ENCODE measurements at regions of chr1 and their contacts with region 1.

Region 1: GRCh38 chr1:82269431-82269830 is 468.7 kb downstream of the ADGRL2 start:
- DNase-seq: no peak
- ATAC-seq: no peak
- H3K4me3 ChIP-seq: no peak overlapping the region
- H3K27ac ChIP-seq: no peak overlapping the region
- H3K4me1 ChIP-seq: no peaks in the 10 kb centered on the region
- H3K27me3 ChIP-seq: no peaks in the 10 kb centered on the region
- CTCF ChIP-seq: no peak

Region 2: DNA sequence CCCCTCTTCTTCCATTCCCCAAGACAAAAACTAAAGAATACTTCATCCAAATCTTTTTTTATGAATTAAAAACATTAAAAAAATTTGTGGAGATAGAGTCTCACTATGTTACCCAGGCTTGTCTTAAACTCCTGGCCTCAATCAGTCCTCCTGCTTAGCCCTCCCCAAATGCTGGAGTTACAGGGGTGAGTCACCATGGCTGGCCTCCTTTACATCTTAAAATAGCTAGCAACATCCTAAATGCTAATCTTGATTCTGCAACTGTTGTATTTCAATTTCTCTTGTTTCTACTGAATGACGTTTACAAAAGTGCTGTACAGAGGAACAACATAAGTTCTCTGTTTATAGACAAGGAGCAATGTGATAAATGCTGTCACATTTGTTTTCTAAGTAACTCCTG is 14.8 kb after region 1 on chr1:
- intact Hi-C with region 1: loop called in 1 of 10 experiments (anchors 2 kb)
- DNase-seq: no peak
- ATAC-seq: no peak
- H3K4me3 ChIP-seq: no peak overlapping the region
- H3K27ac ChIP-seq: no peak overlapping the region
- H3K4me1 ChIP-seq: no peaks in the 10 kb centered on the region
- H3K27me3 ChIP-seq: no peaks in the 10 kb centered on the region
- CTCF ChIP-seq: no peak

Measured in heart right ventricle (tissue), 16 donors.